ENCODE measurements at regions of chr4 and their contacts with region 1.

Region 1: DNA sequence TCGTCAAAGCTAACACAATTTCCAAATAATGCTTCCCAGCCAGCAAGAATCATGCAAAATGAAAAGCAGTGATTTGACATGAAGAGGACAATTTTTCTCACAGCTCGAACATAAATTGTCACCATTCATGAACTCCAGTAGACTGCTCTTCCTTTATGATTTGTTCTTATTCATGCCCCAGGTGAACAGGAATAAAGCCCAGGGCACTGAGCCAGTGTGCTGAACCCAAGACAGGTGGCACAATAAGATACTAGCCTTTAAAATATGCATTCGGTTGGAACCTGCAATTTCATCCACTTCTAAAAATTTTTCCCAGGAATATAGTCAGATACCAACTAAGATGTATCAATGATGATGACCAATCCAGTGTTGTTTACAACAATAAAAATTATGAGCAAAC is 139.7 kb downstream of the PRSS12 start:
- DNase-seq: no peak
- H3K4me3 ChIP-seq: no peak overlapping the region
- H3K27ac ChIP-seq: no peak overlapping the region
- H3K4me1 ChIP-seq: no peaks in the 10 kb centered on the region
- H3K27me3 ChIP-seq: no peaks in the 10 kb centered on the region
- CTCF ChIP-seq: no peak
- EP300 ChIP-seq: no peak
- POLR2A ChIP-seq: no peak

Region 2: GRCh38 chr4:117137145-117137544 is 1076.0 kb before region 1 on chr4:
- intact Hi-C with region 1: loop called (anchors 10 kb)
- DNase-seq: no peak
- H3K4me3 ChIP-seq: no peak overlapping the region
- H3K27ac ChIP-seq: no peak overlapping the region
- H3K4me1 ChIP-seq: peaks cover 0 to 5% (median 0%) of the 10 kb centered on the region in 4 donors
- H3K27me3 ChIP-seq: no peaks in the 10 kb centered on the region
- CTCF ChIP-seq: no peak
- EP300 ChIP-seq: no peak
- POLR2A ChIP-seq: no peak

Measured in stomach (tissue), 19 donors.